ENCODE measurements at regions of chr10 and their contacts with region 1.

Region 1: DNA sequence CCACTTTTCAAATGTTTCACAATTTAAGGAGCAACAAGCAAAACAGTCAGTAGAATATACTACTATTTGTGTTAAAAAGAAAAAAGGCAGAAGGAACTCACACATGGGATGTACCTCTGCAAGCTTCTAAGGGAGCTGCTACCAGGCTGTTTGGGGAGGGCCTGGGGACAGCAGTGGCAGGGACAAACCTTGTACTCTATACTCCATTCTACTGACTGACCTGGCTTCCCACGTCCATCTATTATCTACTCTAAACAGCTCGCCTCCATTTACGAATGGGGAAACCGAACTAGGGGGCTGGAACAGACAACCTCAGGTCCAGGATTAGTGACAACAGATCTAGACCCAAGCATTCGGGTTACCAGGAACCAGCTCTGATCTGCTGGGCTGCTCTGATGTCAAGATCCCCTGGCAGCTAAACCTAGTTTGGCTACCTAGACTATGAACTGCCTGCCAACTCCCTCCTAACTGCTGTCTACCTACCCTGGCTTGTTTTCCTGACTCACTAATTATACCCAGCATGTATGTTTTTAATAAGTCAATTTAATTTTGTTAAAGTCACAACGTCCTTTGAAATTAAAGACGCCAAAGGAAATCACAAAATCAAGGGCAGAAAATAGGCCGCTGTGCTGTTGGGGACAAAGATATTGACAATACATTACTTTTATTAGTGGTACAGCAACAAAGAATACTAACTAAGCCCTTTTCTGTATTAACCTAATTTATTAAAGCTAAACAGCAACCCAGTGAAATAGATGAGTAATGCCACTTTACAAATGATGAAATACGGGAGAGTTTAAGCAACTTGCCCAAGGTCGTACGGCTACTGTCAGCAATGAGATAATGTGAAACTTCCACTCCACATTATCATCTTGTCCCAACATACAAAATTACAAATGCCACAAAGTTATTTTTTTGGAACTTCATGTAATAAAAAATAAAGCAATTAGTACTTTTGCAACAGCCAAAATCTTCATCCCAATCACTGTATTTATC is 5.3 kb downstream of the PSAP start:
- DNase-seq: no peak
- ATAC-seq: no peak
- H3K4me3 ChIP-seq: no peak overlapping the region
- H3K4me3 Mint-ChIP-seq: no peak overlapping the region
- H3K27ac ChIP-seq: no peak overlapping the region
- H3K27ac Mint-ChIP-seq: no peak overlapping the region
- H3K4me1 ChIP-seq: peaks cover 3 to 35% of the 10 kb centered on the region in 2 experiments
- H3K4me1 Mint-ChIP-seq: peaks cover 81 to 88% (median 82%) of the 10 kb centered on the region in 3 donors
- H3K27me3 ChIP-seq: no peaks in the 10 kb centered on the region
- H3K27me3 Mint-ChIP-seq: no peaks in the 10 kb centered on the region

Region 2: GRCh38 chr10:71834343-71834674 is 11.4 kb before region 1 on chr10:
- CTCF ChIA-PET with region 1: interaction called, 3 to 4 read pairs
- POLR2A ChIA-PET with region 1: interaction called in 1 of 2 experiments, 10 read pairs
- DNase-seq: no peak
- ATAC-seq: no peak
- H3K4me3 ChIP-seq: no peak overlapping the region
- H3K4me3 Mint-ChIP-seq: no peak overlapping the region
- H3K27ac ChIP-seq: no peak overlapping the region
- H3K27ac Mint-ChIP-seq: no peak overlapping the region
- H3K4me1 ChIP-seq: peaks cover 0 to 36% of the 10 kb centered on the region in 2 experiments
- H3K4me1 Mint-ChIP-seq: peaks cover 34 to 49% (median 40%) of the 10 kb centered on the region in 3 donors
- H3K27me3 ChIP-seq: no peaks in the 10 kb centered on the region
- H3K27me3 Mint-ChIP-seq: no peaks in the 10 kb centered on the region

Measured in T-cell (primary cell).